CD4-positive, alpha-beta T cell (primary cell): ENCODE measurements at regions of chr12 and their contacts with region 1.

Region 1: DNA sequence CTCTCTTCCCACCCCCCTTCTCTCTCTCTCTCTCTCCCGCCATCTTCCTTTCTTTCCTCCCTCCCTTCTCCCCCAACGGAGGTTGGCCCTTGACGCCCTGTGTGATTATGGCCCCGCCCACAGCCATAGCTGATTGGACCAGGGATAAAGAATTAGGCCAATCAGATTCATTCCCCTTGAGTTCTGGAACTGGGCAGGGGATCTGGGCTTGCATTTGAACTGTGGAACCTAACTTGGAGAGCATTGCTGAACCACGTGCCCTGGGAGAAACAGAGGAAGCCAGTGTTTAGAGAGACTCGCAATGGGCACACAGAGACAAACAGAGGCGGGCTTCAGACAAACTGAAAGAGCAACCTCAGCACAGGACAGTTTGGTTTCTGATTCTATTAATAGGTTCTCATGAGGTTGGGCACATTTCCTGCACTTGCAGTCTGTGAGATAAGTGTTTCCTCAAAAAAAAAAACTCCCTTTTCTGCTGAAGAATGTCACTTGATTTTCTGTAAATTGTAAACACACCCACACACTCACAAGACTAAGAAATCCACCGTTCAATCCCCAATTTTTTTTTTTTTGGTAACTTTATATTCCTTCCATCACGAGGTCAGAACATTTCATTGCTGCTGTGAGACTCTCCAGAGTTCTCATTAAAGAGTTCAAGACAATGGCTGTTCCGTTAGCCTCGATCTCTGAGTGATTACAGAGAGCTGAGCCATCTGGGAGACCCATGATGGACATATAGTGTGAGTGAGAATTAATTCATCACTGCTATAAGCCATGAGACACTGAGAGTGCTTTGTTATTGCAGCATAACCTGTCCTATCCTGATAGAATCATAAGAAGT is 3.5 kb upstream of the P2RX7 start:
- DNase-seq: peak; percentile 56 to 93 (median 74)
- ATAC-seq: peak; percentile 86
- H3K4me3 ChIP-seq: peak overlapping the region; percentile 47
- H3K4me3 Mint-ChIP-seq: peak overlapping the region; percentile 89
- H3K27ac ChIP-seq: peak overlapping the region; percentile 77 to 81
- H3K27ac Mint-ChIP-seq: peak overlapping the region; percentile 83
- H3K4me1 ChIP-seq: peaks cover 61% of the 10 kb centered on the region
- H3K4me1 Mint-ChIP-seq: peaks cover 74% of the 10 kb centered on the region
- H3K27me3 ChIP-seq: no peaks in the 10 kb centered on the region
- H3K27me3 Mint-ChIP-seq: no peaks in the 10 kb centered on the region
- CTCF ChIP-seq: no peak

Region 2: GRCh38 chr12:121223292-121224285 is 94.4 kb after region 1 on chr12:
- CTCF ChIA-PET with region 1: interaction called, 3 read pairs
- POLR2A ChIA-PET with region 1: interaction called, 7 read pairs
- intact Hi-C with region 1: loop called in 1 of 2 experiments (anchors 5 kb)
- DNase-seq: peak in 10 of 14 experiments; percentile 23 to 72 (median 46)
- ATAC-seq: peak; percentile 53
- H3K4me3 ChIP-seq: no peak overlapping the region
- H3K4me3 Mint-ChIP-seq: peak overlapping the region; percentile 55
- H3K27ac ChIP-seq: peak overlapping the region; percentile 48 to 79
- H3K27ac Mint-ChIP-seq: peak overlapping the region; percentile 88
- H3K4me1 ChIP-seq: peaks cover 58% of the 10 kb centered on the region
- H3K4me1 Mint-ChIP-seq: peaks cover 47% of the 10 kb centered on the region
- H3K27me3 ChIP-seq: no peaks in the 10 kb centered on the region
- H3K27me3 Mint-ChIP-seq: no peaks in the 10 kb centered on the region
- CTCF ChIP-seq: no peak

Region 3: DNA sequence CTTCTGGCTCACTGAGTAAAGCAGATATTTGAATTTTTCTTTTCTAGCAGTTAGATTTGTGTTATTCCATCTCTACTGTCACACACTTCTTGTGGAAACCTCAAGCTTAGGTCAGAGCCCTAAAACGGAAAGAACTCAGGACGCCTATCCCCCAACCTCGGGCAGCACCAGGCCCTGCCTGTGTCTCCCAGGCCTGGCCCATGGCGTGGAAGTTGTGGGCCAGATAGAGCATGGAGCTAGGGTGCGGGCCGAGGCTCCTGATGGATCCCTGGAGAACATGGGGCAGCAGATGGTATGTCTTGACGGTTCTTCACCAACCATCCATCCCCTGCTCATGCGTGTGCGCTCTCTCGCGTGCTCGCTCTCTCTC is 101.3 kb after region 1 on chr12:
- CTCF ChIA-PET with region 1: no interaction called
- POLR2A ChIA-PET with region 1: no interaction called
- intact Hi-C with region 1: loop called in 1 of 2 experiments (anchors 5 kb)
- DNase-seq: no peak
- ATAC-seq: no peak
- H3K4me3 ChIP-seq: no peak overlapping the region
- H3K4me3 Mint-ChIP-seq: no peak overlapping the region
- H3K27ac ChIP-seq: no peak overlapping the region
- H3K27ac Mint-ChIP-seq: peak overlapping the region; percentile 55
- H3K4me1 ChIP-seq: peaks cover 37% of the 10 kb centered on the region
- H3K4me1 Mint-ChIP-seq: peaks cover 22% of the 10 kb centered on the region
- H3K27me3 ChIP-seq: no peaks in the 10 kb centered on the region
- H3K27me3 Mint-ChIP-seq: no peaks in the 10 kb centered on the region
- CTCF ChIP-seq: no peak